Right cardiac atrium (tissue), 5 donors: ENCODE measurements at regions of chr2 and their contacts with region 1.

Region 1: GRCh38 chr2:235106874-235107639 is 155.2 kb downstream of the SH3BP4 start:
- DNase-seq: peak; percentile 56 to 86 (median 74)
- ATAC-seq: peak; percentile 77 to 84
- H3K4me3 ChIP-seq: no peak overlapping the region
- H3K27ac ChIP-seq: no peak overlapping the region
- H3K4me1 ChIP-seq: no peaks in the 10 kb centered on the region
- H3K27me3 ChIP-seq: no peaks in the 10 kb centered on the region

Region 2: GRCh38 chr2:234544659-234545611 is 562.1 kb before region 1 on chr2:
- intact Hi-C with region 1: loop called in 1 of 4 experiments (anchors 5 kb)
- DNase-seq: peak; percentile 47 to 79 (median 77)
- ATAC-seq: peak; percentile 63 to 76
- H3K4me3 ChIP-seq: no peak overlapping the region
- H3K27ac ChIP-seq: no peak overlapping the region
- H3K4me1 ChIP-seq: no peaks in the 10 kb centered on the region
- H3K27me3 ChIP-seq: no peaks in the 10 kb centered on the region

Region 3: DNA sequence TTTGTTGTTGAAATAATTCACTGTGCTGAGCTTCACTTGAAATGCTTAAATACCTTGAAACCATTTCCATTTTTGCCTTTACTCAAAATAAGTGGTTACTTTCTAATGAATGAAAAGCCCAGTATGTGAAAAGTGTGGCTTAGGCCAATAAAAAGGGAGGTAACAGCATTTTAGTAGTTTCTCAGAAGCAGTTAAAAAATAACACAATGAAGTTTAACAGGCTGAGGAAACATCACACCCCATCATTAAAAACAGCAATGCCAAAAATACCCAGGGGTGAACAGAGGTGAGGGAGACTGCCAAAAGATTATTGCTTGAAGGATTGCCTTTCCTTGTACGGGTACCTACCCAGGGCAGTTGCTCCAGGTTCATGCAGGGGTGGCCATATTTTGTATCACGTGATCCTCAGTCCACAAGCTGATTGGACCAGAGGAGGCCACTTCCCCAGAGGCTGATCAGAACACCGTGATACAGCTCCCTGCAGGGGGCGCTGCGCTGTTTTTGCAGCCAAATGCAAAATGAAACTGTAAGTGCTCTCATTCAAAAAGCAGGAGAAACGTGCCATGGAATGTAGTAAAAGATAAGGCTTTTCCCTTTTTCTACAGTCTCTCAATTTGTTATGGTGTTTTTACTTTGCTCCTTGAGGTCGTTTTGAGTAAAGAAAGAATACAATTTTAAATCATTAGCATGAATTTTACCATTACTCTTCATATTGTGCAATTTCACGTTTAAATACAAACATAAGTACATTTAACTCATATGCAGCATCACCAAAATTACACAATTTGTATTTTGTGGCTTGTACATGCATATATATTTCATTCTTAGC is 225.4 kb before region 1 on chr2:
- intact Hi-C with region 1: loop called in 3 of 4 experiments (anchors 5 to 10 kb)
- DNase-seq: peak; percentile 88 to 95 (median 94)
- ATAC-seq: peak; percentile 98
- H3K4me3 ChIP-seq: peak overlapping the region; percentile 30
- H3K27ac ChIP-seq: no peak overlapping the region
- H3K4me1 ChIP-seq: peaks cover 2% of the 10 kb centered on the region
- H3K27me3 ChIP-seq: no peaks in the 10 kb centered on the region

Region 4: GRCh38 chr2:235080101-235080500 is 27.0 kb before region 1 on chr2:
- intact Hi-C with region 1: no loop called
- DNase-seq: no peak
- ATAC-seq: no peak
- H3K4me3 ChIP-seq: no peak overlapping the region
- H3K27ac ChIP-seq: no peak overlapping the region
- H3K4me1 ChIP-seq: no peaks in the 10 kb centered on the region
- H3K27me3 ChIP-seq: no peaks in the 10 kb centered on the region

Region 5: DNA sequence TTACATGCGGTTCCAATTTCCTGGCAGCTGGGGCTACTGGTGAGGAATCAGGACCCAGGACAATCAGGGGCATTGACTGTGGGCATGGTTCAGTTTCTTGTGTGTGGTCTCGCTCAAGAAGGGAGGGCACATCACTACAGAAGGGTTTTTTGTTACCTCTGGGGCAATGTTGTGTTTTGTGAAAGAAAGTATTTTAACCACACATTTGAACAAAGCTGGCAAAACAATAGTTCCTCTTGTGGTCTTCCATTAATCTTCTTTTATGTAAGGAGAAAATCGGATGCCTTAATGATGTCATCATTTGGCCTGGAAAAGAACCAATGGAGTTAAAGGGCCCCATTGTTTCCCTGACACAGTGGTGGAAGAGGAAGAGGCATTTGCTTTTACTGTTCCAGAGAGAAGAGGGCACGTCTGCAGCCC is 42.2 kb after region 1 on chr2:
- intact Hi-C with region 1: no loop called
- DNase-seq: no peak
- ATAC-seq: no peak
- H3K4me3 ChIP-seq: no peak overlapping the region
- H3K27ac ChIP-seq: no peak overlapping the region
- H3K4me1 ChIP-seq: no peaks in the 10 kb centered on the region
- H3K27me3 ChIP-seq: no peaks in the 10 kb centered on the region

Region 6: DNA sequence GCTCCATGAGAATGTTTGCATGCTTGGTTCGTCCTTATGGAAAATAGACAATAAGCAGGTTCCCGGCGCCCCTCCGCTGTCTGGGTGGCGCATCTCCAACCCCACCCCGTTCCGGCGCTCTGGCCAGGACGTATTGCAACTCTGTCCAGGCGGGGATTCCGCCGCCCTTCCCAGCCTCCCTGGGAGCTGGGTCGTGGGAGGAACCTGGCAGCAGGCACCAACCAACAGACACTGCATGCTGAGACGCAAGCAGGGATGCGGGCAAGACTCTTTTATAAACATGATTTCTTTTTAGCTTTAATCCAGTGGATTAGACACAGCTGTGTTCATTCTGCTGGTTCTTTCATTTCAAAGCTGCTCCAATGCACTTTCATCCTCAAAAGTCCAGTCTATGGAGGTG is 84.9 kb after region 1 on chr2:
- intact Hi-C with region 1: no loop called
- DNase-seq: peak in 2 of 3 donors; percentile 27 to 57
- ATAC-seq: peak in 1 of 2 donors; percentile 36
- H3K4me3 ChIP-seq: no peak overlapping the region
- H3K27ac ChIP-seq: no peak overlapping the region
- H3K4me1 ChIP-seq: no peaks in the 10 kb centered on the region
- H3K27me3 ChIP-seq: no peaks in the 10 kb centered on the region